OCI-LY7 (cell line): ENCODE measurements at regions of chr19 and their contacts with region 1.

Region 1: DNA sequence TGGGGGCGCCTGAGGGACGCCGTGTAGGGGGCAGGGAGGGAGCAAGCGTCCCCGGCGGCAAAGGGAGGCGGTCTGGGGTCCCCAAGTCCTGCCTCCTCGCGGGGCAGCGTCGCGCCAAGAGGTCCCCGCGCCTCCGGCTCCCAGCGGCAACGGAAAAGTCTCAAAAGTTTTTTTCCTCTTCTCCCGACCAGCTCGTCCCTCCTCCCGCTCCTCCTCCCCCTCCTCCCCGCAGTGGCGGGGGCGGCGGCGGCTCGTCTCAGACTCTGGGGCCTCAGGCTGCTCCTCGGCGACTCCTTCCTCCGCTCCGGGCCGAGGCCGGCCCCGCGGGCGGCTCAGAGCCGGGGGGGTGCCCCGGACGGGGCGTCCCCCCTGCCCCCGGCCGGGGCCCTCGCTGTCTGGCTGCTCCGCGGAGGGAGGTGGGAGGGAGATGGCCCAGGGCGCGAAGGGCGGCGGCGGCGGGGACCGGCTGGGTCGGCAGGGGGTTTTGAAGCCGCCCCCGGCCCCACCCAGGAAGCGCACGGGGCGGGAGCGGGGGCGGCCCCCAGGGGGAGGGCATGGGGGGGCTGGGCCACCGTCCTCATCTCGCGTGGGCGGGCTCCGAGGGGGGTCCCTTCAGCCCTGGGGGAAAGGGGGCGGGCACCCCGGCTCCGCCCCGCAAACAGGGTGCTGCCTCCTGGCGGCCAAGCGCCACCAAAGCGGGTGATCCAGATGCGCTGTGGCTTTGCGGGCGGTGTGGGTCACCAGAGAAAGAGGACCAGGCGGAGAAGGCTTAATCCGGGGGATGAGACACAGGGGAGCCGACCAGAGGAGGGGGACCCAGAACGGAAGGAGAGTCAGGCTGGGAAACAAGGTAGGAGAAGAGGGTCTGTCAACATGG is at the start of gene TGFB1:
- DNase-seq: peak; percentile 93
- H3K4me3 ChIP-seq: peak within 1 kb of the TSS; percentile 77
- H3K27ac ChIP-seq: peak within 1 kb of the TSS; percentile 54
- H3K4me1 ChIP-seq: peaks cover 21% of the 10 kb centered on the region
- CTCF ChIP-seq: peak; percentile 85
- total RNA-seq, gene TGFB1: 10.9 and 15.5 TPM in 2 replicates

Region 2: DNA sequence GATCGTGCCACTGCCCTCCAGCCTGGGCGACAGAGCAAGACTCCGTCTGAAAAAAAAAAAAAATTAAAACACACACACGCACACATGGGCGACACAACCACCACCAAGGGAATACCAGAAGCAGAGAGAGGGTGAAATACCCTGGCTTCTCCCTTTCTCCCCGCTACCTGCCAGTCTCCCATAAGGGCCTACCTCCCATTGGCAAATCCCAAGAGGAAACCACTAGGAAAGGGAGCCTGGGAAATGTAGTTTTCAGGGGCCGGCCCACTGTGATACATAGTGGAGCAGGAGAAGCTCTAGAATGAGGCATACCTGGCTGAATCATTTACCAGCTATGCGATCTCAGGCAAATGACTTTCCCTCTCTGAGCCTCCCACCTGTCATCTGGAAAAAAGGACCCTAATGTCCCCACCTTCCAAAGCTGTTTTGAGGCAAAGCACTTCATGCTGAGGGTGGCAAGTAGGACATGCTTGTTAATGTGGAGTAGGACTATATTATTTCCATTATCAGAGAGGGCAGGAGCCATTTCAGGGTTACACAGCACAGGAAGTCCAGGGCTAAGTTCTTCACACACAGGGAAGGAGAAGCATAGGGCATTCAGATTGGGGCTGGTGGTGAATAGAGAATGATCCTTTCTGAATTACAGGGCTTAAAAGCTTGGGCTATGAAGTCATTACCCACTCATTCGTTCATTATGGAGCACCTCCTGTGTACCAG is 103.8 kb before region 1 on chr19:
- CTCF ChIA-PET with region 1: no interaction called
- POLR2A ChIA-PET with region 1: no interaction called
- intact Hi-C with region 1: no loop called
- DNase-seq: no peak
- H3K4me3 ChIP-seq: no peak overlapping the region
- H3K27ac ChIP-seq: no peak overlapping the region
- H3K4me1 ChIP-seq: no peaks in the 10 kb centered on the region
- CTCF ChIP-seq: no peak

Region 3: GRCh38 chr19:41327576-41328156 is 26.0 kb before region 1 on chr19:
- CTCF ChIA-PET with region 1: interaction called, 4 read pairs
- POLR2A ChIA-PET with region 1: interaction called, 4 read pairs
- intact Hi-C with region 1: loop called (anchors 1 kb)
- DNase-seq: peak; percentile 80
- H3K4me3 ChIP-seq: peak overlapping the region; percentile 61
- H3K27ac ChIP-seq: peak overlapping the region; percentile 79
- H3K4me1 ChIP-seq: peaks cover 53% of the 10 kb centered on the region
- CTCF ChIP-seq: no peak